ENCODE measurements at regions of chr4 and their contacts with region 1.

Region 1: DNA sequence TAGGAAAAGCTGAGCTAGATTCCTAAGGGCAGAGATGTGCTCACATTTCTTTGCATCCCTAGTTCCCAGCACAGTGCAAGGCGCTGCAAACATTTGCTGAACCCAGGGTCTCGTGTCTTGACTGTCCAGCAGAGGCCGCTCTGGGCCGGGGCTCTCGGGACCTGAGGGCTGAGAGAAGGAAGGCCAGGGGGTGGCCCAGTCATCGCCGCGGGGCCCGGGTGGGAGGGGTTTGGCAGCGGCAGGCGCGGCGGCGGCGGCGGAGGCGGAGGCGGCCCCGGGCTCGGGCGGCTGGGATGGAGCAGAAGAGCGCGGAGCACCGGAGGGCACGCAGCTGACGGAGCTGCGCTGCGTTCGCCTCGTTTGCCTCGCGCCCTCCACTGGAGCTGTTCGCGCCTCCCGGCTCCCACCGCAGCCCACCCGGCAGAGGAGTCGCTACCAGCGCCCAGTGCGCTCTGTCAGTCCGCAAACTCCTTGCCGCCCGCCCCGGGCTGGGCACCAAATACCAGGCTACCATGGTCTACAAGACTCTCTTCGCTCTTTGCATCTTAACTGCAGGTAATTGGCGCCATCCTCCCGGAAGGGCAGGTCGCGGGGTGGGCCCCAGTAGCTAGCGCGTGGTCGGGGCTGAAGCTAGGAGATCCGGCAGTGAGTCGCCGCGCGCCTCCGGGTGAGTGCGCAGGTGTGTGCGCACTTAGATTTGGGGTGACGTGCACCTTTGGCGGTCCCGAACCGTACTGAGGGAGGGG is at the start of gene PARM1:
- DNase-seq: peak; percentile 73 to 94
- H3K4me3 ChIP-seq: peak within 1 kb of the TSS; percentile 62 to 80 (median 65)
- H3K27ac ChIP-seq: no peak within 1 kb of the TSS
- H3K4me1 ChIP-seq: peaks cover 0 to 15% (median 7%) of the 10 kb centered on the region in 4 experiments; a peak in 5 of 7 replicates
- H3K27me3 ChIP-seq: peaks cover 4 to 30% (median 26%) of the 10 kb centered on the region in 4 experiments
- CTCF ChIP-seq: peak; percentile 68 to 88 (median 78)
- EP300 ChIP-seq: no peak
- POLR2A ChIP-seq: peak in 1 of 2 experiments; percentile 40; a peak in 1 of 3 replicates
- RAD21 ChIP-seq: peak; percentile 88 to 95
- total RNA-seq, gene PARM1: 5.2 and 5.3 TPM in 2 replicates

Region 2: GRCh38 chr4:74944328-74944793 is 11.4 kb after region 1 on chr4:
- CTCF ChIA-PET with region 1: interaction called, 21 read pairs
- POLR2A ChIA-PET with region 1: interaction called, 3 read pairs
- DNase-seq: no peak
- H3K4me3 ChIP-seq: no peak overlapping the region
- H3K27ac ChIP-seq: no peak overlapping the region
- H3K4me1 ChIP-seq: peaks cover 0 to 2% (median 0%) of the 10 kb centered on the region in 4 experiments; a peak in 1 of 7 replicates
- H3K27me3 ChIP-seq: no peaks in the 10 kb centered on the region
- CTCF ChIP-seq: no peak
- EP300 ChIP-seq: no peak
- POLR2A ChIP-seq: no peak
- RAD21 ChIP-seq: no peak

Region 3: GRCh38 chr4:74969507-74970474 is 36.8 kb after region 1 on chr4:
- CTCF ChIA-PET with region 1: interaction called, 11 read pairs
- POLR2A ChIA-PET with region 1: no interaction called
- DNase-seq: peak in 1 of 2 experiments; percentile 46
- H3K4me3 ChIP-seq: no peak overlapping the region
- H3K27ac ChIP-seq: no peak overlapping the region
- H3K4me1 ChIP-seq: no peaks in the 10 kb centered on the region
- H3K27me3 ChIP-seq: no peaks in the 10 kb centered on the region
- CTCF ChIP-seq: peak; percentile 28 to 70 (median 52); a peak in 3 of 4 replicates
- EP300 ChIP-seq: no peak
- POLR2A ChIP-seq: no peak
- RAD21 ChIP-seq: peak; percentile 35 to 46; a peak in 3 of 4 replicates

Region 4: GRCh38 chr4:75118739-75119138 is 185.8 kb after region 1 on chr4:
- CTCF ChIA-PET with region 1: interaction called, 12 read pairs
- POLR2A ChIA-PET with region 1: no interaction called
- DNase-seq: no peak
- H3K4me3 ChIP-seq: no peak overlapping the region
- H3K27ac ChIP-seq: no peak overlapping the region
- H3K4me1 ChIP-seq: no peaks in the 10 kb centered on the region
- H3K27me3 ChIP-seq: no peaks in the 10 kb centered on the region
- CTCF ChIP-seq: no peak
- EP300 ChIP-seq: no peak
- POLR2A ChIP-seq: no peak
- RAD21 ChIP-seq: no peak

Region 5: GRCh38 chr4:75289914-75290582 is 357.1 kb after region 1 on chr4:
- CTCF ChIA-PET with region 1: interaction called, 33 read pairs
- POLR2A ChIA-PET with region 1: no interaction called
- DNase-seq: peak; percentile 27 to 52
- H3K4me3 ChIP-seq: no peak overlapping the region
- H3K27ac ChIP-seq: no peak overlapping the region
- H3K4me1 ChIP-seq: no peaks in the 10 kb centered on the region; a peak in 1 of 7 replicates
- H3K27me3 ChIP-seq: no peaks in the 10 kb centered on the region
- CTCF ChIP-seq: peak; percentile 33 to 76 (median 72)
- EP300 ChIP-seq: no peak
- POLR2A ChIP-seq: no peak
- RAD21 ChIP-seq: peak; percentile 88 to 93